ENCODE measurements at regions of chr4 and their contacts with region 1.

Region 1: DNA sequence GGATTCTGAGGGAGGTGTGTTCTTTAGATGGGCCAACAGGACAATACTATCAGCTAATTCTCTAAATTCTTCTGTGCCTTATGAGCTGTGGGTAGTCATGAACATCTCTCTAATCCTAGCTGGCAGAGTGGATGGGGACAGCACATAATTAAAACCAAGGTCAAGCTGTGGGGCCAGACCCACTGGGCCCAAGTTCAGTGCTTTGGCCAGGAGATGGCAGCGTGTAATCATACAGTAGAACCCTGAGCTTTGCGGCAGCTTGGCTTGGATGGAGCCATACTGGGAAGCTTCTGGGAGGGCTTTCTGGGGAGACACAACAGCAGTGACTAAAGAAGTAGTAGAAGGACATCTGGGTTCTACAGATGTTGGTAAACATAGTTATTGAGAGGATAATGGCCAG is 140.3 kb upstream of the CXCL13 start:
- DNase-seq: peak; percentile 48
- ATAC-seq: peak; percentile 64
- H3K4me3 ChIP-seq: no peak overlapping the region
- H3K27ac ChIP-seq: no peak overlapping the region
- H3K4me1 ChIP-seq: no peaks in the 10 kb centered on the region
- H3K27me3 ChIP-seq: no peaks in the 10 kb centered on the region
- CTCF ChIP-seq: peak; percentile 63

Region 2: DNA sequence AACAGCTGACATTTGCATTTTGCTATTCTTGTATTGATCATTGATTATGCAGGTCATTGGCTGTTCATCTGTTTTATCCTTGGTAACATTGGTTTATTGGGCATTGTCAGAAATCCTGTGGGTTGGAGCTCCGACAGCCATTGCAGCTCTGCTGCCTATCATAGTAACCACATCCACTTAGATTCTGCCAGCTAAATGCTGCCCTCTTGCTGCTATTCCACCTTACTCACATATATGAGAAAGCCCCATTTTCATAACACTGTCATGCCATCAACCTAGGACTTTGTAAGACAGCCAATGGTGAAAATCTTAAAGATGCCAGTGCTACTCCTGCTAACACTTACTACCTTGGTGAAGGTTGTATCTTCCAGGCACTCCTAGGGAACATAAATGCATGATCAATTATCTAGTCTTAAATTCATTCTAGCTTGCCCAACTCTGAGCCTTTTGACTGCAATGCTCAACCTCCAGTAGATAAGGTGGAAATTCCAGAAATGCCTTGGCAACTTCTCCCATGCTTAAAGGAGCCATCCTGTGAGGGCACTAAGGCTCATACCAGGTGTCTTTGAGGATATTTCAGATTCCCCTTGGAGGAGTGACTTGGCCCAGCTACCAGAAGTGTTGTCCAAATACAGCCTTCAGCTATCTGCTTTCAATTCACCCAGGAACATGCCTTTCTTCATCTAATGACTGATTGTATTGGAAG is 46.8 kb before region 1 on chr4:
- CTCF ChIA-PET with region 1: no interaction called
- POLR2A ChIA-PET with region 1: no interaction called
- intact Hi-C with region 1: no loop called
- DNase-seq: peak; percentile 41
- ATAC-seq: no peak
- H3K4me3 ChIP-seq: no peak overlapping the region
- H3K27ac ChIP-seq: no peak overlapping the region
- H3K4me1 ChIP-seq: no peaks in the 10 kb centered on the region
- H3K27me3 ChIP-seq: peaks cover 29% of the 10 kb centered on the region
- CTCF ChIP-seq: peak; percentile 51

Region 3: DNA sequence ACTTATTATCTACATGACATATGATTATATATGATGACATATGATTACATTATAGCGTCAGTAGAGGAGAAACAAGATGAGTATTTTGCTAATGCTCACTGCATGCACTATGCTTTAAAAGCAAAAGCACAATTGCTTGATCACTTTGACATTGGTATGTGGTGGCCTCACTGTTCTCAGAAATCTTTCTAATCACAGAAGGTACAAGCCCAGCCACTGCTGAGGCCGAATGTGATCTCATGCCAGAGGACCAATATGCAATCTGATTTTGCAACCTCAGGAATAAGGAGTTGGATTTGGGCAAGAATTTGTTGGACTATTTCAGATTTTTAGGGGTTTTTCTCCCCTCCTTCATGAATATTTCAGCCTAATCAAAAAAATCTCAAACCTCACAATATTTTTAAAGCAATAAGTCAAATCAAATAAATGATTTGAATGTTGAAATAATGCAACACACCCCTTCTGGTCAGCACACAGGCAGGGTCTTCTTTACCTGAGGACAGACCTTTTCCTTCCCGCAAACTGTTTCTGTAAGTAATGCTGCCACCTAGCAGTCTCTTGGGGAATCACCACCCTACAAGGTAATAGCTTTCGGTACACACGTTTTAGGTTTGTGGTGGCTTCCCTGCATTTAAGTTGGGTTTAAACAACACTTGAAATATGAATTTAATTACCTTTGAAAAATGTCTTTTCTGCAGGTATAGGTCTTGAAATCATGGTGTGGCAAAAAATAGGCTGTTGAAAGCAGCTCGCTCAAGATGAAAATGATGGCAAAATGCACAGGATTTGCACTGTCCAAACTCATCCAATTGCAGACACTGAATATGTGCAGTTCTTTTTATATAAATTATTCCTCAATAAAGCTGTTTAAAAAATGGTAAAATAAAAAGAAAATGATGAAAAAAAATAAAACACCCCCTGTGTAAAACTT is 135.5 kb after region 1 on chr4:
- CTCF ChIA-PET with region 1: interaction called, 20 read pairs
- POLR2A ChIA-PET with region 1: no interaction called
- intact Hi-C with region 1: loop called (anchors 1 kb)
- DNase-seq: peak; percentile 58
- ATAC-seq: peak; percentile 65
- H3K4me3 ChIP-seq: no peak overlapping the region
- H3K27ac ChIP-seq: no peak overlapping the region
- H3K4me1 ChIP-seq: no peaks in the 10 kb centered on the region
- H3K27me3 ChIP-seq: peaks cover 27% of the 10 kb centered on the region
- CTCF ChIP-seq: peak; percentile 84

Measured in PC-3 (cell line).